IMR-90 (cell line): ENCODE measurements at regions of chr16 and their contacts with region 1.

Region 1: DNA sequence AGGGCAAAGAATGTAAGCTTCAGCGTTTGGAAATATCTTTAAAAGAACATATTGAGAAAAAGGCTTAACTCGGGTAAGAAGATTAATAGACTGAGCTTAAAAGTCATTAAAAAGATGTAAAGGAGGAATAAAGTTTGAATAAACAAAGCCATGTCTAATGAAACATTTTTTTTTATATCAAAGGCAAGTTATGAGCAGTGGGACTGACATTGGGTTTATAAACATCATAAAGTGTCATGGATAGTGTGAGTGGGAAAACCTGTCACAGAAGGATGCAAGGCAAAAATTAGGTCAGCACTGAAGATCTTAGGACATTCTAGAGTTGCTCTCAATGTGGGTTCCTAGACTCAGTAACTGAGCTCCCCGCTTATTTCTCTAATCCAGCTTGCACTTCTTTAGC is 438.0 kb upstream of the CDH11 start:
- DNase-seq: no peak
- ATAC-seq: no peak
- H3K4me3 ChIP-seq: no peak overlapping the region
- H3K27ac ChIP-seq: no peak overlapping the region
- H3K4me1 ChIP-seq: no peaks in the 10 kb centered on the region
- H3K27me3 ChIP-seq: no peaks in the 10 kb centered on the region
- CTCF ChIP-seq: no peak
- POLR2A ChIP-seq: no peak
- RAD21 ChIP-seq: no peak

Region 2: DNA sequence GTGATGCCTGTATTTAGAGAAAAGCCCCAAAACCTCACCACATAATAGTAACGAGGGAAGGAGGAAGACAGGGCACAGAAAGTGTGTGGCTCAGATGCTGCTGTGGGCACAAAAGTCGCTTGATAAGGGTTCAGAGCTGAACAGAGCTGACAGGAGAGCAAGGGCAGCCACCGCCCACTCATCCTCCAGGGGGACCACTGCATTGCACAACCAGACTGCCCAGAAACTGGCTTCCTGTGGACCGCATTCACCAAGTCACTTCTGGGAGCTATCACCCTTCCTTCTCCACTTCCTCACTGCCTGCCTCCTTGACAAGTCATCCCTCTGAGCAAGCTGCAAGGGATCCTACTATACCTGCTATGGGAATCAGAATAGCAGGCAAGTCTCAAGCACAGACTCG is 74.4 kb after region 1 on chr16:
- CTCF ChIA-PET with region 1: no interaction called
- POLR2A ChIA-PET with region 1: no interaction called
- dilution Hi-C with region 1: no loop called
- in situ Hi-C with region 1: no loop called
- intact Hi-C with region 1: loop called (anchors 2 kb)
- DNase-seq: peak; percentile 4
- ATAC-seq: no peak
- H3K4me3 ChIP-seq: no peak overlapping the region
- H3K27ac ChIP-seq: no peak overlapping the region
- H3K4me1 ChIP-seq: no peaks in the 10 kb centered on the region
- H3K27me3 ChIP-seq: peaks cover 16% of the 10 kb centered on the region
- CTCF ChIP-seq: no peak
- POLR2A ChIP-seq: no peak
- RAD21 ChIP-seq: no peak

Region 3: DNA sequence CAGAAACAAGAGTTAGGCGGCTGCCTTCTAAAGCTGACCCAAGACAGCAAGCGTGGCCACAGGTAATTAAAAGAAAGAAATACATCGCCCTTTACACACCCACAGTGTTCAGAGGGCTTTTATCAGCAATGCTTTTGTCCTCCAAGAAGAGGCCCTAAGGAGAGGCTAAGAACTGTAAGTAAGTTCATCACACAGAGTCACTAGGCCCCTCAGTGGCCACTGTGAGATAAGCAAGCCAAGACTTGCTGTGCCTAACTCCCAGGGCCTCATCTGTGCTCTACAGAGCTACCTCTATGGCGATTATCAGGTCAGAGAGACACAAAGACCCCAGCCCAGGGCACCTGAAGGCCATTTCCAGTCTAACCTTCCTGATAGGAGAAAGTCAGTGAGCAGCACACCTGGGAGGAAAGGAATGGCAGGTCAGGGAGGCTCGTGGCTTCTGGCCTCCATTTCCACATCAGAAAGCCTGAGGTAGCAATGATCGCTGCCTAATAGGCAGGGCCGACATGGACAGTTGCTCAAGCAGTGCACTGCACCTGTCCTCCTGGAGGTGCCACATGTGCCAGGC is 107.2 kb after region 1 on chr16:
- CTCF ChIA-PET with region 1: no interaction called
- POLR2A ChIA-PET with region 1: no interaction called
- dilution Hi-C with region 1: no loop called
- in situ Hi-C with region 1: no loop called
- intact Hi-C with region 1: no loop called
- DNase-seq: peak; percentile 28
- ATAC-seq: peak; percentile 61
- H3K4me3 ChIP-seq: no peak overlapping the region
- H3K27ac ChIP-seq: no peak overlapping the region
- H3K4me1 ChIP-seq: no peaks in the 10 kb centered on the region; the same call in 1 of the 2 replicates
- H3K27me3 ChIP-seq: no peaks in the 10 kb centered on the region
- CTCF ChIP-seq: no peak
- POLR2A ChIP-seq: no peak
- RAD21 ChIP-seq: peak; percentile 30; the same call in 1 of the 2 replicates

Region 4: DNA sequence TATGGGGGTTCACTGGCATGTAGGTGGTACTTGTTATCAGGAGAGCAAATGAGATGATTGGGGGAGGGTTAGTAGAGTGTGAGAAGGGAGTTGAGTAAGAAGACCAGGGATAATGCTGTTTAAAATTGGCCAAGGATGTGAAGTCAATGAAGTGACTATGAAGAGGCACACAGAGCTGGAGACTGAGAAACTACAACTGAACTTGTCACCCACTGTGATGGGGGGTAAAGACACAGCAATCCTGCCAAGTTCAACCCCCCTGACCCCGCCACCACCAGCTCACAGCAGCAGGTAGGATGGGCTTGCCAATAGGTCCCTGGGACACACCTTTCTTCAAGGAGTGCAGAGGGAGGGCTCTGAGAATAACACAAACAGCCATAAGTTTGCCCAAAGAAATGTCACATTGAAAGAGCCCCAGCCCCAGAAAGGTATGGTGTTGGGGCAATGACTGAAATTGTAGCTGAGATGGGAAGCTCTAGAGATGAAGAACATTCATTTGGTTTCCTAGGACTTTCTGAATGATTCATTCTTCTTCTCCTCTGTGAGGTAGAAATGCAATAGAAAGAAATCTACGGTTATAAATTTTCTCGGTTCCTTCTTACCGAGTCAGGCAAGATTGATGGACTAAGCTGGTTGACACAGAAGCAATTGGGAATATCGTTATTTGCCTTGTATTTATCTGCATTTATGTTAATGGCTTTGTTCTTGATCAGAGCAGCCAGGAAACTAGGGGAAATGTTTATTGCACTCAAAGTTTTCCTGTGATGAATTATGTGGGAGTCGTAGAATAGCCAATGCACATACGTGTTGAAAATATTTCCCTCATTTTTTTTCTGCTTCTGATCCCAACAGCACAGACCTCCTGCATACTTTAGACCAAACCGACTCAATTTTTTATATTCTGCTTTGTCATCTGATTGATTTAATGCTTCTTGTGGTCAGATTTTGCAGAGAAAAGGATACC is 157.2 kb after region 1 on chr16:
- CTCF ChIA-PET with region 1: no interaction called
- POLR2A ChIA-PET with region 1: no interaction called
- dilution Hi-C with region 1: no loop called
- in situ Hi-C with region 1: no loop called
- intact Hi-C with region 1: no loop called
- DNase-seq: no peak
- ATAC-seq: no peak
- H3K4me3 ChIP-seq: no peak overlapping the region
- H3K27ac ChIP-seq: no peak overlapping the region
- H3K4me1 ChIP-seq: no peaks in the 10 kb centered on the region; the same call in 1 of the 2 replicates
- H3K27me3 ChIP-seq: peaks cover 32% of the 10 kb centered on the region
- CTCF ChIP-seq: no peak
- POLR2A ChIP-seq: no peak
- RAD21 ChIP-seq: no peak